H1 (cell line): ENCODE measurements at regions of chr17 and their contacts with region 1.

Region 1: GRCh38 chr17:39668199-39668966 is at the start of gene PNMT:
- DNase-seq: peak in 1 of 2 experiments; percentile 87
- H3K4me3 ChIP-seq: peak within 1 kb of the TSS; percentile 29 to 67 (median 32)
- H3K27ac ChIP-seq: no peak within 1 kb of the TSS
- H3K4me1 ChIP-seq: peaks cover 0 to 43% (median 36%) of the 10 kb centered on the region in 4 experiments; a peak in 6 of 7 replicates
- H3K27me3 ChIP-seq: peaks cover 0 to 25% (median 6%) of the 10 kb centered on the region in 4 experiments; a peak in 4 of 7 replicates
- CTCF ChIP-seq: peak; percentile 63 to 72 (median 67)
- EP300 ChIP-seq: no peak
- POLR2A ChIP-seq: no peak
- RAD21 ChIP-seq: peak; percentile 19 to 61; a peak in 3 of 4 replicates
- total RNA-seq, gene PNMT: 4.4 and 5.6 TPM in 2 replicates

Region 2: DNA sequence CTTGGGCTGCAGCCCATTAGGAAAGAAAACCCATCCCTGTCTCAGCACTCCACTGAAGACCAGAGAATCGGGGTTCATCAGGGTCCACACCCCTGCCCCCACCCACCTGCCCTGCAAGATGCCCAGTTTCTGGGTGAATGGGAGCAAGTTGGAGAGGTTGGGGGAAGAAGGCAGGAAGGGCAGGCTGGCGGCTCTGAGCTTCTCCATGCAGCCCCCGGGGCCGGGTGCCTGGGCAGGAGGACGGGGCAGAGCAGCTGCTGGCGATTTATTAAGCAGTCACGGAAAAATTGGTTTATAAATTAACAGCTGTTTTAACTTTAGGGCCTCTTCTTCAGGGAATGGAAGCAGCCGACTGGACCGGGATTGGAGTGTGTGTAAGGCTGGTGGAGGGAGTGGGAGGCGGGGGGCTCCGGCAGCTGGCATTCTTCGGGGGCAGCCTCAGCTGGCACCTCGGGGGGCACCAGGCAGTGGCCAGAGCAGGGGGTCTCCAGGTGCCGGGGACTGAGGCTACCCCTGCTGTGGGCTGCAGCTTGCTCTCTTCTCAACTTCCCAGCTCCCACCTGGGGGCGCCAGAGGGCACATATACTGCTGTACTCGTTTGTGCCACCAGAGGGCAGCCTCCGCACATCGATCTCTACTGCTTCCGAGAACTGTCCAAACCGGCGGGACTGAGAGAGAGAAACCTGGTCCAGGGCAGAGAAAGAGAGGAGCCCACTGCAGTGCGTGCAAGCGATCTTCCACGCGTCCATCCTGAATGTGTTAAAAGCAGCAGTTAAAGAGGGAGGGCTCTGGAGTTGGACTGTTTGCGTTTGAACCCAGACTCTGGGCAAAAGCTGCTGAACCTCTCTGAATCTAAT is 46.6 kb before region 1 on chr17:
- CTCF ChIA-PET with region 1: interaction called, 1,885 read pairs
- POLR2A ChIA-PET with region 1: interaction called, 11 read pairs
- DNase-seq: peak in 1 of 2 experiments; percentile 100
- H3K4me3 ChIP-seq: no peak overlapping the region
- H3K27ac ChIP-seq: no peak overlapping the region
- H3K4me1 ChIP-seq: peaks cover 0 to 20% (median 14%) of the 10 kb centered on the region in 4 experiments; a peak in 6 of 7 replicates
- H3K27me3 ChIP-seq: peaks cover 18 to 53% (median 50%) of the 10 kb centered on the region in 4 experiments
- CTCF ChIP-seq: peak; percentile 100
- EP300 ChIP-seq: peak in 1 of 2 experiments; percentile 49; a peak in 1 of 3 replicates
- POLR2A ChIP-seq: no peak
- RAD21 ChIP-seq: peak; percentile 96 to 97

Region 3: GRCh38 chr17:39653662-39654331 is 14.6 kb before region 1 on chr17:
- CTCF ChIA-PET with region 1: interaction called, 1,885 read pairs
- POLR2A ChIA-PET with region 1: interaction called, 14 read pairs
- DNase-seq: peak in 1 of 2 experiments; percentile 97
- H3K4me3 ChIP-seq: no peak overlapping the region
- H3K27ac ChIP-seq: no peak overlapping the region
- H3K4me1 ChIP-seq: peaks cover 5 to 26% (median 21%) of the 10 kb centered on the region in 4 experiments
- H3K27me3 ChIP-seq: no peaks in the 10 kb centered on the region
- CTCF ChIP-seq: peak; percentile 88 to 95 (median 94)
- EP300 ChIP-seq: no peak
- POLR2A ChIP-seq: no peak
- RAD21 ChIP-seq: peak; percentile 56 to 74

Region 4: DNA sequence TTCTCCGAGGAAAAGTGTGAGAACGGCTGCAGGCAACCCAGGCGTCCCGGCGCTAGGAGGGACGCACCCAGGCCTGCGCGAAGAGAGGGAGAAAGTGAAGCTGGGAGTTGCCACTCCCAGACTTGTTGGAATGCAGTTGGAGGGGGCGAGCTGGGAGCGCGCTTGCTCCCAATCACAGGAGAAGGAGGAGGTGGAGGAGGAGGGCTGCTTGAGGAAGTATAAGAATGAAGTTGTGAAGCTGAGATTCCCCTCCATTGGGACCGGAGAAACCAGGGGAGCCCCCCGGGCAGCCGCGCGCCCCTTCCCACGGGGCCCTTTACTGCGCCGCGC is 31.4 kb after region 1 on chr17 and contains the start of gene ERBB2:
- CTCF ChIA-PET with region 1: interaction called, 28 read pairs
- POLR2A ChIA-PET with region 1: interaction called, 708 read pairs
- DNase-seq: peak in 1 of 2 experiments; percentile 67
- H3K4me3 ChIP-seq: peak within 1 kb of the TSS; percentile 78 to 98 (median 89)
- H3K27ac ChIP-seq: peak within 1 kb of the TSS; percentile 68; the same call in 1 of the 2 replicates
- H3K4me1 ChIP-seq: peaks cover 26 to 48% (median 33%) of the 10 kb centered on the region in 4 experiments
- H3K27me3 ChIP-seq: no peaks in the 10 kb centered on the region
- CTCF ChIP-seq: no peak
- EP300 ChIP-seq: no peak
- POLR2A ChIP-seq: peak in 1 of 2 experiments; percentile 59; a peak in 1 of 3 replicates
- RAD21 ChIP-seq: no peak
- total RNA-seq, gene ERBB2: 394 and 403 TPM in 2 replicates

Region 5: DNA sequence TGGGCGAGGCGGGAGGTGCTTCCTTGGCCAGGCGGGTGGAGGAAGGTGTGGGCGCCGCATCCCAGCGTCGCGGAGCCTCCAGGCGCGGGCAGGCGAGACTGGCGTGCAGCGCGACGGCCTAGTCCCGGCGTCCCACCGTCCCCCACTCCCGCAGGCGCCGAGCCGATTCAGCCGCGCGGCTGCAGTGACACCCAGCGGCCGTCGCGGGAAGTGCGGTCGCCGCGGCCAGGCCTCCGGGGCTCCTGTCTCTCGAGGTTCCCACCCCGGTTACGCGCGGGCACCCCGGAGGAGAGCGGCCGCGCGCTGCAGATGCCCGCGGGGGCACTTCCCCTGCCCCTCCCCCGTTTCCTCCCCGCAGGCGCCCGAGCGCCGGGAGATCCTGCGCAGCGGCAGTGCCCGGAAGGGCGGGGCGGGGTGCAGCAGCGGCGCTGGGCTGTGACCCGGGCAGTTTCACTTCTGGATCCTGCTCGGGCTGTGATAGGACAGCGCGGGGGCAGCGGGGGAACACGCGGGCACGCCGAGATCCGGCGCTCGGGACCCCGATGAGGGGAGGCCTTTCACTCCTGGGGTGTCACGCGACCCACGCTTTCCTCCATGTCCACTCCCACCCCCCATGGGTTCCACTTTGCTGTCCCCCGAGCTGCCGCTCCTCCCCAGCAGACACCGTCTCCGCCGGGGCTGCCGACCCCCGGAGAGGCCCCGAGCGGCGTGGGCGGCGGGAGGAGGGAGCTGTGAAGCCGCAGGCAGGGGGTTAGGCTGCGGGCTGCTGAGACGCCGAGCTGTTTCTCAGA is 86.0 kb after region 1 on chr17:
- CTCF ChIA-PET with region 1: interaction called, 12 read pairs
- POLR2A ChIA-PET with region 1: interaction called, 4 read pairs
- DNase-seq: peak in 1 of 2 experiments; percentile 96
- H3K4me3 ChIP-seq: peak overlapping the region; percentile 30 to 82 (median 74)
- H3K27ac ChIP-seq: no peak overlapping the region
- H3K4me1 ChIP-seq: peaks cover 9 to 29% (median 21%) of the 10 kb centered on the region in 4 experiments
- H3K27me3 ChIP-seq: peaks cover 0 to 3% (median 2%) of the 10 kb centered on the region in 4 experiments; a peak in 2 of 7 replicates
- CTCF ChIP-seq: peak; percentile 81 to 89 (median 89)
- EP300 ChIP-seq: no peak
- POLR2A ChIP-seq: 0 out of 3 replicates have a peak, but pooled peaks of 1 of the 2 experiments have one; percentile 32
- RAD21 ChIP-seq: peak; percentile 89 to 92